Panc1 (cell line): ENCODE measurements at regions of chr1 and their contacts with region 1.

Region 1: DNA sequence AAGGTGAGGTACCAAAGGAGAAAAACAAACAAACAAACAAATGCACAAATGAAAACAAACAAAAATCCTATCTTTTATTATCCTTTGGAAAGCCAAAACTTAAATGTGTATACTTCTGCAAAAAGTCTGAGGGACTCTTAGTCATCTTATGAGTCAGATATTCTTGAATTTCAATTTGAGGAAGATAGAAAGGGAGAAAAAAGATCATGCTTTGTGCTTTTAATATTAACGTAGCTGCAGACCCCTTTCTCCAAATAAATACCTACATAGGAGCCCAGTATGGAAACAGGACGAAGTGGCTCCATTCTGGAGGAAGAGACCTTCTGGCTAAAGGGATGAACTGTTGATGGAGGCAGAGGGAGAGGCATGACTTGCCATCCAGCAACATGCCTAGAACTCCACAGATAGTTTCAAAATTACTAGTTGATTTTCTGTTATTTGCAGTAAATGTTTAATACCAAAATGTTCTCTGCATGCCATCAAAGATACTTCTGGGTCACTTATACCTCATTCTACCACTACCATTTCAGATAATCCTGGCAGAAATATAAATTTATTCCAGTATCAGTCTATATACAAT is 25.4 kb downstream of the NUP210L start:
- DNase-seq: no peak
- ATAC-seq: no peak
- H3K4me3 ChIP-seq: no peak overlapping the region
- H3K27ac ChIP-seq: no peak overlapping the region
- H3K4me1 ChIP-seq: no peaks in the 10 kb centered on the region
- H3K27me3 ChIP-seq: no peaks in the 10 kb centered on the region
- CTCF ChIP-seq: no peak

Region 2: DNA sequence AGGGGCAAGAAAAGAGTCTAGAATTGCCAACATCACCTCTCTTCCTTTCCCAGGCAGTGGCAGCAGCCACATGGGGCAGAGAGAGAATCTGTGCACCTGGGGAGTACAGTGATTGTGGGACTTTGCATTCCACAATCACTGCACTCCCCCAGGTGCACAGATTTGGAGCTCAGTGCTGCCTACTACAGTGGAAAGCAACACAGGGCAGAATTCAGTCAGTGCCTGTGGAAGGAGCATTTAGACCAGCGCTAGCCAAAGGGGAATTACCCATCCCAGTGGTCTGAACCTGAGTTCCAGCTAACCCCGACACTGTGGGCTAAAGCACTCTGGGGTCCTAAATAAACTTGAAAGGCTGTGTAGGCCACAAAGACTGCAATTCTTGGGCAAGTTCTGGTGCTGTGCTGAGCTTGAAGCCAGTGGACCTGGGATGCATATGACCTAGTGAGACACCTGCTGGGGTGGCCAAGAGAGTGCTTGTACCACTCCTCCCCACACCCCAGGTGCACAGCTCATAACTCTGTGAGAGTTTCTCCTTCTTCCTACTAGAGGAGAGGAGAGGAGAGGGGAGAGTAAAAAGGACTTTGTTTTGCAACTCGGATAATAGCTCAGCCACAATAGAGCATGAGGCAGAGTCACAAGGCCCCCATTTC is 24.9 kb before region 1 on chr1:
- CTCF ChIA-PET with region 1: no interaction called
- POLR2A ChIA-PET with region 1: interaction called, 12 read pairs
- in situ Hi-C with region 1: no loop called
- intact Hi-C with region 1: no loop called
- DNase-seq: no peak
- ATAC-seq: peak; percentile 68
- H3K4me3 ChIP-seq: no peak overlapping the region
- H3K27ac ChIP-seq: no peak overlapping the region
- H3K4me1 ChIP-seq: no peaks in the 10 kb centered on the region
- H3K27me3 ChIP-seq: no peaks in the 10 kb centered on the region
- CTCF ChIP-seq: no peak

Region 3: DNA sequence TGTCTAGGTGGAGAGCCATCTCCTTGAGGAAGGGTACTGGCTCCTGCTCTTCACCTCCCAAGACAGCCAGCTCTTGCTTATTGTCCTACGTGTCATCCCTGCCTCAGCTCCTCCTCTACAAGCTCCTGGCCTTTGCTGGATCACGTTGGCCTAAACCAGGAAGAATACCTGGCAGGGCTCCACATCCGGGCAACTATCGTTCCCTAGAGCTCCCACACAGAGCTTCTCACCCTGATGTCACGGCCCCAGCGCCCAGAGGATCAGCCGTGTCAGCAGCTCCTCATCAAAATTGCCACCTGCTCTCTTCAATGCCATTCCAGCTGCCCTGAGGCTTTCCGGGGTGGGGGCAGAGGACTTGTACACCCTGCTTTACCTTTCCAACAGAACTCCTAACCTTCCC is 64.3 kb after region 1 on chr1:
- CTCF ChIA-PET with region 1: no interaction called
- POLR2A ChIA-PET with region 1: interaction called, 17 read pairs
- in situ Hi-C with region 1: no loop called
- intact Hi-C with region 1: no loop called
- DNase-seq: no peak
- ATAC-seq: no peak
- H3K4me3 ChIP-seq: no peak overlapping the region
- H3K27ac ChIP-seq: no peak overlapping the region
- H3K4me1 ChIP-seq: no peaks in the 10 kb centered on the region
- H3K27me3 ChIP-seq: peaks cover 13% of the 10 kb centered on the region
- CTCF ChIP-seq: no peak